Vagina (tissue), 2 donors: ENCODE measurements at regions of chr4 and their contacts with region 1.

Region 1: GRCh38 chr4:10164877-10165283 is 48.3 kb upstream of the WDR1 start:
- DNase-seq: no peak
- H3K4me3 ChIP-seq: no peak overlapping the region
- H3K27ac ChIP-seq: no peak overlapping the region
- H3K4me1 ChIP-seq: no peaks in the 10 kb centered on the region
- H3K27me3 ChIP-seq: no peaks in the 10 kb centered on the region
- CTCF ChIP-seq: peak in 2 of 3 experiments; percentile 35 to 48
- POLR2A ChIP-seq: no peak

Region 2: DNA sequence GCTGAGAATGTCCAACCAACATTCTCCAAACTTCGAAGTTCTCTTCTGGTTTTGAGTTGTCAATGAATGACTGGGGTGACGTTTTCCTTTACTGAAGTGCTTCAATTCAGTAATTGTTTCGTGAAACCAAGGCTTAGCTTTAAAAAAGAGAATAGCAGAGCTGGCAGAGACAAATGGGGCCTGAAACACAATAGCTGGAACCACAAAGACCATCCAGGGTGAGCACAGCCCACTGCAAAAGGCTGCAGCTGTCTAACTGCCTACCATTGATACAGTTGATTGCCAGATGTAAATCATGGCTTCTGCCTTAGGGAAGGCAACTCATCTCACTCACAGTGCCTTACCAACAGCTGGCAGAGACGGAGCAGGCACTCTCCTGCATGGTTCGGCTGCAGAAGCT is 371.0 kb after region 1 on chr4:
- intact Hi-C with region 1: loop called (anchors 5 kb)
- DNase-seq: no peak
- H3K4me3 ChIP-seq: no peak overlapping the region
- H3K27ac ChIP-seq: no peak overlapping the region
- H3K4me1 ChIP-seq: no peaks in the 10 kb centered on the region
- H3K27me3 ChIP-seq: no peaks in the 10 kb centered on the region
- CTCF ChIP-seq: no peak
- POLR2A ChIP-seq: no peak